AG04450 (cell line): ENCODE measurements at regions of chr11 and their contacts with region 1.

Region 1: DNA sequence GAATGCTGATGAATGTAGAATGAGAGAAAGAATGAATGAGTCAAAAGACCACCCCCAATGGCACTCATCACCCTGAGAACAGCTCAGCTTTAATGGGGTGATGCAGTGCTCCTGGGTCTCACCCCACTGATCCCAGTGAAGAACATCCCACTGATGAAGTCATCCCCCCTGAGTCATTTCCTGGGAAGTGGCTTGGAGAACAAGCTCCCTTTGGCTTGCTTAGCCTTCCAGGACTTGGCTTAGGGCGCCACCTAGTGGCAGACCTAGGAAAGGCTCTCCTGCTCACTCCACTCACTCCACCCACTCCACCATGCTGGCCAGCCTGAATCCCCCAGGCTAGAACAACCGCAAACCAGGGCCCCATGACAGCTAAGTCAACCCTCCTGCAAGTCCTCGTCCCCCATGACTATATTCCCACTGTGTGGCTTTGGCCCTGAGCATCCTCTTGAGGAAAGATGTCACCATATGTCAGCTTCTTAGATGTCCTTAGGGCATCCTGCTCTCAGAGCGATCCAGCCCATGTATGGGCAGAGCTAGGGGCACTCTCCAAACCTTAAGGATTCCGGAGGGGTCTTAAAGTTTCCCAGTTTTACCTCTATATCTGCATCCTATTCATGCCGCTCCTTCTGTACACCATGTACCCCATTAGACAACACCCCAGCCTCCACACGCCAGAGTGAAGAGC is 17.8 kb upstream of the TMPRSS13 start:
- DNase-seq: peak; percentile 85
- H3K4me3 ChIP-seq: no peak overlapping the region
- H3K27ac ChIP-seq: no peak overlapping the region
- H3K27me3 ChIP-seq: peaks cover 21% of the 10 kb centered on the region
- CTCF ChIP-seq: peak; percentile 97

Region 2: DNA sequence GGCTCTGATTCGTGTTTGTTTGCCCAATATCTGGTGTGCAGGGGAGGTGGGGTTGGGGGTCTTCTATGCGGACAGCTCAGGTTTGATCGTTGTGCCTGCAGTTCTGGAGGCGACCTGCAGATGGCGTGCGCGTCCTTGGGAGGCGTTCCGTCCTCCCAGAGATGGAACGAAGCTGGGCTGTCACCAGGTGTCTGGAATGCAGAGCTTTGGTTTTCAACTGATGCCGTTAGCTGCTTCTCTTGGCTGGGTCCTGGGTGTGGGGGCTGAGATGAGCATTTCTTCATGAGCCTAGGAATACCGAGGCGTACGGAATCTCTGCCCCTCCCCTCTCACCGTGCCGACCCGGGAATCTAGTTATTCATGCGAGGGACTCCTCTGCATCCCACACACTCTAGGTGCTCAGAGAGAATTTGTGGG is 520.7 kb before region 1 on chr11:
- CTCF ChIA-PET with region 1: interaction called, 18 read pairs
- POLR2A ChIA-PET with region 1: interaction called, 4 read pairs
- DNase-seq: no peak
- H3K4me3 ChIP-seq: no peak overlapping the region
- H3K27ac ChIP-seq: no peak overlapping the region
- H3K27me3 ChIP-seq: peaks cover 18% of the 10 kb centered on the region
- CTCF ChIP-seq: peak; percentile 99

Region 3: GRCh38 chr11:117807482-117808327 is 139.3 kb before region 1 on chr11:
- CTCF ChIA-PET with region 1: interaction called, 207 read pairs
- POLR2A ChIA-PET with region 1: interaction called, 3 read pairs
- DNase-seq: peak; percentile 29
- H3K4me3 ChIP-seq: no peak overlapping the region
- H3K27ac ChIP-seq: no peak overlapping the region
- H3K27me3 ChIP-seq: peaks cover 19% of the 10 kb centered on the region
- CTCF ChIP-seq: peak; percentile 92

Region 4: GRCh38 chr11:117828611-117829368 is 118.2 kb before region 1 on chr11:
- CTCF ChIA-PET with region 1: interaction called, 38 read pairs
- POLR2A ChIA-PET with region 1: no interaction called
- DNase-seq: peak; percentile 51
- H3K4me3 ChIP-seq: no peak overlapping the region
- H3K27ac ChIP-seq: no peak overlapping the region
- H3K27me3 ChIP-seq: peaks cover 16% of the 10 kb centered on the region
- CTCF ChIP-seq: no peak

Region 5: DNA sequence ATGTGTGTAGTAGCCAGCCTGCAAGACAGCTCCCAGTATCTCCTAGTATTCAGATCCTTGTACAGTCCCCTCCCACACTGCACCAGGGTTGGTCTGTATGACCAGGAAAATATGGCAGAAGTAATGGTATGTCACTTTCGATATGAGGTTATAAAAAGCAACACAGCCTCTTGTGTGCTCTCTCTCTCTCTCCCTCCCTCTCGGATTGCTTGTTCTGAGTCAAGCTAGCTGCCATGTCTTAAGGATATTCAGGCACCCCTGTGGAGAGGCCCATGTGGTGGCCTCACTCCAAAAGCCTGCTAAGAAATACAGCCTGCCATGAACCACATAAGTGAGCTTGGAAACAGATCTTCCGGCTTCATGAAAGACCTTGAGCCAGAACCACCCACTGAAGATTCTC is 95.9 kb before region 1 on chr11:
- CTCF ChIA-PET with region 1: interaction called, 256 read pairs
- POLR2A ChIA-PET with region 1: no interaction called
- DNase-seq: no peak
- H3K4me3 ChIP-seq: no peak overlapping the region
- H3K27ac ChIP-seq: no peak overlapping the region
- H3K27me3 ChIP-seq: peaks cover 7% of the 10 kb centered on the region
- CTCF ChIP-seq: no peak

Region 6: DNA sequence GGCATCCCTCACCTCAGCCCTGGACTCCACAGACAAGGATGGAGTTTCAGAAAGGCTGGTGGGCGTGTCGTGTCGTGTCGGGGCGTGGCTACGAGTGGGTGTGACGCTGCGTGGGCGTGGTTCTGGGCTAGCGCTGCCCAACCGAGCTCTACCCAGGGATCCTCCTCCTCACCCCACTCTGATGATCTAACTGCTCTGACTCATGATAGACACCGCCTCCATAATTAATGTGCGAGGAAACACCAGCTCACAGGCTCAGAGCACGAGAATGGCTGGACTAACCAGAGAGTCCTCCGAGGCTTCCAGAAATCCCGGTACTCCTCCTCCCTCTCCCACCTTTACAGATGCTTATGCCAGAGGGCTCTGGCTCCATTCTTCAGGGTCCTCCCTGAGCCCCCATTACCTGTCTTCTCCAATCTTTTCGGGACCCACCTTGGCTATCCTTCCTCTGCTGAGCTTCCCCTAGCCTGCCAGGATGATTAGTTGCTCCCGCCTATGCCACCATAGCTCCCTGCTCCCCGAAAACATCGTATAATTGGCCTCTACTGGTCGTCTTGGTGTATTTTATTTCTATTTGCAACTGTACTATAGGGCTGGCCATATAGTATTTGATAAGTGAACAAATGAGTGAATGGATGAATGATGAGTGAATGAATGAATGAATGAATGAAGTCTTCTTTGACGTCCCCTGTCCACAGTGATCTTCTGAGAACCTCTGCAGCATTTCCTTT is 39.6 kb before region 1 on chr11:
- CTCF ChIA-PET with region 1: interaction called, 10 read pairs
- POLR2A ChIA-PET with region 1: no interaction called
- DNase-seq: peak; percentile 70
- H3K4me3 ChIP-seq: no peak overlapping the region; the same call in 1 of the 2 replicates
- H3K27ac ChIP-seq: no peak overlapping the region
- H3K27me3 ChIP-seq: peaks cover 3% of the 10 kb centered on the region
- CTCF ChIP-seq: no peak

Region 7: DNA sequence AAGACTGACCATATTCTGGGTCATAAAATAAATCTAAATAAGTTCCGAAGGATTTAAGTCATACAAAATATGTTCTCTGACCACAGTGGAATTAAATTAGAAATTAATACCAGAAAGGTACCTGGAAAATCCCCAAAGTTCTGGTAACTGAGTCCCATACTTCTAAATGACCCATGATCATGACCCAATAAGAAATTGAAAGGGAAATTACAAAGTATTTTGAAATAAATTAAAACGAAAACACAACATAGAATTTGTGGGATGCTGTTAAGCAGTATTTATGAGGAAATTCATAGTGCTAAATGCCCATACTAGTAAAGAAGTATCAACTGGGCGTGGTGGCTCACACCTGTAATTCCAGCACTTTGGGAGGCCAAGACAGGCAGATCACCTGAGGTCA is 15.8 kb after region 1 on chr11:
- CTCF ChIA-PET with region 1: interaction called, 10 read pairs
- POLR2A ChIA-PET with region 1: no interaction called
- DNase-seq: no peak
- H3K4me3 ChIP-seq: no peak overlapping the region
- H3K27ac ChIP-seq: no peak overlapping the region
- H3K27me3 ChIP-seq: no peaks in the 10 kb centered on the region
- CTCF ChIP-seq: no peak